ENCODE measurements at regions of chr5 and their contacts with region 1.

Region 1: DNA sequence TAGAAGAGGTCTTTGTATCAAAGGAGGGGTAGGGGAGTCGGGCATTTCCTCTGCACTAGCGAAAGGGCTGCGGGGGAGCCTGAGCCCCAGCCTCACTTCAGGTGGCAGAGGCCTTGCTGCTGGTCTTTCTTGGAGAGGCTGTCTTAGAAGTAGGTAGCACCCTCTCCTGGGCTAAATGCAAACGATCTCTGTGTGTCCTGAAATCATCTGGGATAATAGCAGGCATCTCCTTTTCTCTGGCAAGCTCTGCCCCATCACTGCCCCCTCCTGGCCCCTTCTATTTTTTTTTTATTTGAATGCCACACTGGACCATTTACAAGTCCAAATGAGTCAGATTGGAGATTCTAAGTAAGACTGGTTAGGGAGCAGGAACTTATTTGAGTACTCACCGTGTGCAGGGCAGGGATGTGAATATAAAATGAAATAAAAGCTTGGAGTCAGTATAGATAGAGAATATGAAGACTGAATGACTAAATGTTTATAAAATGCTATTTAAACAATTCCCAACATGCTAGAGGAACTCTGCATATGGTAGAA is 137.1 kb downstream of the FGF1 start:
- DNase-seq: peak; percentile 94

Region 2: GRCh38 chr5:142364251-142365145 is 184.3 kb before region 1 on chr5:
- in situ Hi-C with region 1: loop called (anchors 10 kb)
- DNase-seq: peak; percentile 90